Right lobe of liver (tissue), 6 donors: ENCODE measurements at regions of chrX and their contacts with region 1.

Region 1: GRCh38 chrX:151151665-151152267 is 24.6 kb upstream of the GPR50 start:
- DNase-seq: no peak
- ATAC-seq: peak; percentile 71 to 90 (median 86)
- H3K4me3 ChIP-seq: no peak overlapping the region
- H3K27ac ChIP-seq: no peak overlapping the region
- H3K4me1 ChIP-seq: no peaks in the 10 kb centered on the region
- H3K27me3 ChIP-seq: peaks cover 0 to 6% of the 10 kb centered on the region in 2 donors
- CTCF ChIP-seq: peak; percentile 85 to 92 (median 89)
- POLR2A ChIP-seq: no peak

Region 2: DNA sequence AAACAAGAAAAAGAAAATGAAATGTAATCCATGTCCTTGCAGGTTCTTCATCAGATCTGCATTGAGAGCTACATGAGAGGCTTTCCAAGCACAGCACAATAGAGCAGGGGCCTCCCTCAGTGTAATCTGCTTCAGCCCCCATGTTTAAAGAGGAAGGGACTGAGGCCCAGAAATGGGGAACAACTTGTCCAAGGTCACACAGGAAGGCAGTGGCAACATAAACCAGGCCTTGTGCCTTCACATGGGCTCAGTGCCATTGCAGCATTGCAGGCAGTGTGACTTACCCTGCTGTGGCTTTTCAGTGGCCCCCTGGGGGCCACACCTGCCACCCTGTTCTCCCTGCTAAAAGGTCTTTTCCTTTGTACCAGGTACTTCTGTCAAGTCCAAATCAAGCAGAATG is 232.4 kb before region 1 on chrX:
- intact Hi-C with region 1: no loop called
- DNase-seq: no peak
- ATAC-seq: no peak
- H3K4me3 ChIP-seq: no peak overlapping the region
- H3K27ac ChIP-seq: no peak overlapping the region
- H3K4me1 ChIP-seq: no peaks in the 10 kb centered on the region
- H3K27me3 ChIP-seq: no peaks in the 10 kb centered on the region
- CTCF ChIP-seq: no peak
- POLR2A ChIP-seq: no peak

Region 3: GRCh38 chrX:151675121-151675746 is 523.5 kb after region 1 on chrX:
- intact Hi-C with region 1: loop called (anchors 10 kb)
- DNase-seq: no peak
- ATAC-seq: no peak
- H3K4me3 ChIP-seq: no peak overlapping the region
- H3K27ac ChIP-seq: no peak overlapping the region
- H3K4me1 ChIP-seq: no peaks in the 10 kb centered on the region
- H3K27me3 ChIP-seq: no peaks in the 10 kb centered on the region
- CTCF ChIP-seq: no peak
- POLR2A ChIP-seq: no peak